ENCODE measurements at regions of chr2 and their contacts with region 1.

Region 1: DNA sequence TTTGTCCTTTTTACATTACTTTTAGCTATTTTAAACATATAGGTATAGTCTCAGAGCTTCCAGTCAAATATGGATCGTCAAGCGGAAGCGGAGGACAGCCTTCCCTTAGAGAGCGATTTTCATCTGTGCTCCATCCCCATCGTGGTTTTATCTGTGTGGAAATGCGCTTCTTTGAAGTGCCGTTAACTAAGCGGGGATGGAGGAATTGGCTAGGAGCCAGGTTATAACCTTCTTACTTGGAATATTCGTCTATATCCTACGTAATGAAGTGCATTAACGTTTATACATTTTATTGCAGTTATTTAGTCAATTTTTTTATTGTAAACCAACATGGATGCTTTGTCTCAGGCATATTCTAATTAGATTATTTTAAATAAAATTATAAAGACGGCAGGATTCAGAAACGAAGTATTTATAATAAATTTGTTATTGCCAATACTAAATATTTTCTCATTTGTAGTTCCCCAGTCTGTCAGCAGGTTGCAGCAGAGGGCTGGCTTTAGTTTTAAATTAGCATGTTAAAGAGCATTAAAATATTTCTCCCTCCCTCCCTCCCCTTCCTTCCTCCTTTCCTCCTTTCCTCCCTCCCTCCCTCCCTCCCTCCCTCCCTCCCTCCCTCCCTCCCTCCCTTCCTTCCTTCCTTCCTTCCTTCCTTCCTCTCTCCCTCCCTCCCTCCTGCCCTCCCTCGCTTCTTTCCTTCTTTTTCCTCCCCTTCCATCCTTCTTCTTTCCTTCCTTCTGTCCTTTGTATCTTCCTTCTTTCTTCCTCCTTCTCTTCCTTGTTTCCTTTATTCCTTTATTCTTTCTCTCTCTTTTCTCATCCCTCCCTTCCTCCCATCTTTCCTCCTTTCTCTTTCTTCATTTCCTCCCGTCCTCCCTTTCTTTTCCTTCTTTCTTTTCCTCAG is 80.6 kb upstream of the DOCK10 start:
- DNase-seq: peak; percentile 65
- ATAC-seq: no peak
- H3K4me3 ChIP-seq: no peak overlapping the region
- H3K27ac ChIP-seq: no peak overlapping the region
- H3K4me1 ChIP-seq: peaks cover 52% of the 10 kb centered on the region
- H3K27me3 ChIP-seq: no peaks in the 10 kb centered on the region
- CTCF ChIP-seq: peak; percentile 45

Region 2: DNA sequence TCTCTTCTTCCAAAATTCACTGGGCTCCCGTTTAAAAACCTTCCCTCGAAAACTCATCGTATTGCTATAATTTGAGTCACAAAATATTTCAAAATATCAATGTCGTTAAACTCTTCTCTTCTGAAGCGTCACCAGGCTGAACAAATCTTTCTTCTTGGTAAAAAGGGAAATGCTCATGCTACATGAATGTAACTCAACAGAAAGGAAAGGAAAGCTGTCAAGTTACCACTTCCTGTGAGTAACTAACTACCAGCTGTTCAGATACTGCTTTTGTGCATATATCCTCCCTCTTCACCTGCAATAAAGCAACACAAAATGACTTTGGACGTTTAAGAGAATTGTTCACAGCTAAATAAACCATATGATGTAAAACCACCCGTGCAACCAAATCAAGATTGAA is 175.9 kb before region 1 on chr2:
- CTCF ChIA-PET with region 1: no interaction called
- POLR2A ChIA-PET with region 1: no interaction called
- intact Hi-C with region 1: no loop called
- DNase-seq: peak; percentile 72
- ATAC-seq: peak; percentile 89
- H3K4me3 ChIP-seq: 0 out of 2 replicates have a peak overlapping the region, but pooled peaks have one; percentile 12
- H3K27ac ChIP-seq: peak overlapping the region; percentile 21; the same call in 1 of the 2 replicates
- H3K4me1 ChIP-seq: peaks cover 10% of the 10 kb centered on the region
- H3K27me3 ChIP-seq: no peaks in the 10 kb centered on the region
- CTCF ChIP-seq: no peak

Region 3: DNA sequence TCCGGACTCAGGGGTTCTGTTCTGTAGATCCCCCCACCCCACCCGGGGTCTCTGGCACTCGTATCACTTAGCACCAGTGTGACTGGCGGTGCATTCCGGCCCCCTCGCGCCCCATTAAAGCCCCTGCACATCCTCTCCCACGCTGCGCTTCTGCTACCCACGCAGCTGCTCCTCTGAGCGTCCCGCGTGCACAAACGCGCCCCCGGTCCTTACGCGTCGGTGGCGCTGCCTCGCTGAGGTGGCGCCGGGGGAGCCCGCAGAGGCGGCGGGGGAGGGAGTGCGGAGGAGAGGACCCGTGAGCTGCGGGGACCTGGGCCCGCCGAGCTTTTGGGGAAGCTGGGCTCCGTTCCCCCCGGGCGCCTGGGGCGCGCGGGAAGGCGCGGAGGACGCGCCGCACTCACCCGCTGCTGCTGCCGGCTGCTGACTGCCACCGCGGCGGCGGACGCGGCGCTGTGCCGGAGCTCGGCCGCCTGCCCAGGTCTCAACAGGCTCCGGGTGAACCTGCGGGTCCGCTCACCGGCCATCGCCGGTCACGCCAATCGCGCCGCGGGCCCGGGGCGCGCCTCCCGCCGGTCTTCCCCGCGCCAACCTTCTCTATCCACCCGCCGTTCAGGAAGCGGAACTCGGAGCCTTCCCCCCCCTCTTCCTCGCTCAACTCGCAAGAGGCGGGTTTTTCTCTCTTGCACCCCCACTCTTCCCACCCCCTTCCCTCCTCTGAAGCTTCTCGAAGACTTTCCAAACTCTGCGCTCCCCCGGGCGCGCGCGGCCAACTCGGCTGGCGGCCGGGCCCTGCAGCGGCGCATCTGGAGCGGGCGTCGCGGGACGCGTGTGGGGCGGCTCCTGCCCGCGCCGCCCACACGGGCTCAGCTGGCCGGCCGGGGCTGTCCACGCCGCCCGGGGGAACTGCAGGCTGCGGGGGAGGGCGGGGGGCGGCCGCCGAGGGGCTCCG is 80.7 kb before region 1 on chr2 and contains the start of gene DOCK10:
- CTCF ChIA-PET with region 1: no interaction called
- POLR2A ChIA-PET with region 1: no interaction called
- intact Hi-C with region 1: loop called (anchors 2 kb)
- DNase-seq: peak; percentile 35
- ATAC-seq: peak; percentile 39
- H3K4me3 ChIP-seq: peak within 1 kb of the TSS; percentile 86
- H3K27ac ChIP-seq: peak within 1 kb of the TSS; percentile 7
- H3K4me1 ChIP-seq: peaks cover 10% of the 10 kb centered on the region; the same call in 1 of the 2 replicates
- H3K27me3 ChIP-seq: no peaks in the 10 kb centered on the region
- CTCF ChIP-seq: no peak; the same call in 1 of the 2 replicates
- total RNA-seq, gene DOCK10: 23.1 and 38.5 TPM in 2 replicates

Region 4: DNA sequence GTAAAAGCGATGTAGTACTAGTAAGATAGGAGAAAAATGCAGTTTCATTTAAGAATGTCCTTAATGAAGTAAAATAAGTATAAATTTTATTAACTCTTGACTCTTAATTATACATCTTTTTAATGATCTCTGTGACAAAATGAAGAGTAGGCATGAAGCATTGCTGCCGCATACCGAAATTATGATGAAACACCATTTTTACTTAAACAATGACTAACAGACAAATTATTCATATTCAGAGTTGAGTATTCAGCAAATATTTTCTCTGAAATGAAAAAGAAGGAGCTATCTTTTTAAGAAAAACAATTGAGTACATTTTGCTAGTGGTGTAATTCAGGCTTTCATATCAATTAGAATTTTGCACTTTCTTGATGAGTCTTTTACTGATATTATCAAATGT is 70.0 kb after region 1 on chr2:
- CTCF ChIA-PET with region 1: no interaction called
- POLR2A ChIA-PET with region 1: no interaction called
- intact Hi-C with region 1: loop called (anchors 5 kb)
- DNase-seq: peak; percentile 58
- ATAC-seq: peak; percentile 38
- H3K4me3 ChIP-seq: no peak overlapping the region
- H3K27ac ChIP-seq: no peak overlapping the region
- H3K4me1 ChIP-seq: peaks cover 24% of the 10 kb centered on the region
- H3K27me3 ChIP-seq: no peaks in the 10 kb centered on the region
- CTCF ChIP-seq: no peak

Region 5: GRCh38 chr2:225282858-225283710 is 160.2 kb after region 1 on chr2:
- CTCF ChIA-PET with region 1: no interaction called
- POLR2A ChIA-PET with region 1: no interaction called
- intact Hi-C with region 1: loop called (anchors 1 kb)
- DNase-seq: peak; percentile 75
- ATAC-seq: peak; percentile 79
- H3K4me3 ChIP-seq: no peak overlapping the region
- H3K27ac ChIP-seq: no peak overlapping the region
- H3K4me1 ChIP-seq: peaks cover 9% of the 10 kb centered on the region
- H3K27me3 ChIP-seq: no peaks in the 10 kb centered on the region
- CTCF ChIP-seq: peak; percentile 84

Region 6: GRCh38 chr2:225452677-225453076 is 329.8 kb after region 1 on chr2:
- CTCF ChIA-PET with region 1: no interaction called
- POLR2A ChIA-PET with region 1: no interaction called
- intact Hi-C with region 1: loop called (anchors 2 kb)
- DNase-seq: no peak
- ATAC-seq: no peak
- H3K4me3 ChIP-seq: no peak overlapping the region
- H3K27ac ChIP-seq: no peak overlapping the region
- H3K4me1 ChIP-seq: no peaks in the 10 kb centered on the region
- H3K27me3 ChIP-seq: no peaks in the 10 kb centered on the region
- CTCF ChIP-seq: no peak

Region 7: GRCh38 chr2:225660262-225661131 is 537.7 kb after region 1 on chr2:
- CTCF ChIA-PET with region 1: interaction called, 9 read pairs
- POLR2A ChIA-PET with region 1: no interaction called
- intact Hi-C with region 1: loop called (anchors 1 kb)
- DNase-seq: peak; percentile 84
- ATAC-seq: peak; percentile 89
- H3K4me3 ChIP-seq: no peak overlapping the region
- H3K27ac ChIP-seq: no peak overlapping the region
- H3K4me1 ChIP-seq: no peaks in the 10 kb centered on the region
- H3K27me3 ChIP-seq: no peaks in the 10 kb centered on the region
- CTCF ChIP-seq: peak; percentile 92